Tibial artery (tissue), 4 donors: ENCODE measurements at regions of chr10 and their contacts with region 1.

Region 1: GRCh38 chr10:72248468-72249151 is 25.1 kb upstream of the DDIT4 start:
- DNase-seq: peak; percentile 93 to 97
- H3K4me3 ChIP-seq: peak overlapping the region; percentile 28 to 37
- H3K27ac ChIP-seq: peak overlapping the region; percentile 85 to 91
- H3K4me1 ChIP-seq: peaks cover 11 to 99% (median 85%) of the 10 kb centered on the region in 4 donors
- H3K27me3 ChIP-seq: no peaks in the 10 kb centered on the region
- CTCF ChIP-seq: no peak

Region 2: GRCh38 chr10:71957546-71958275 is 290.9 kb before region 1 on chr10:
- intact Hi-C with region 1: no loop called
- DNase-seq: no peak
- H3K4me3 ChIP-seq: no peak overlapping the region
- H3K27ac ChIP-seq: no peak overlapping the region
- H3K4me1 ChIP-seq: peaks cover 0 to 2% (median 1%) of the 10 kb centered on the region in 4 donors
- H3K27me3 ChIP-seq: no peaks in the 10 kb centered on the region
- CTCF ChIP-seq: no peak

Region 3: DNA sequence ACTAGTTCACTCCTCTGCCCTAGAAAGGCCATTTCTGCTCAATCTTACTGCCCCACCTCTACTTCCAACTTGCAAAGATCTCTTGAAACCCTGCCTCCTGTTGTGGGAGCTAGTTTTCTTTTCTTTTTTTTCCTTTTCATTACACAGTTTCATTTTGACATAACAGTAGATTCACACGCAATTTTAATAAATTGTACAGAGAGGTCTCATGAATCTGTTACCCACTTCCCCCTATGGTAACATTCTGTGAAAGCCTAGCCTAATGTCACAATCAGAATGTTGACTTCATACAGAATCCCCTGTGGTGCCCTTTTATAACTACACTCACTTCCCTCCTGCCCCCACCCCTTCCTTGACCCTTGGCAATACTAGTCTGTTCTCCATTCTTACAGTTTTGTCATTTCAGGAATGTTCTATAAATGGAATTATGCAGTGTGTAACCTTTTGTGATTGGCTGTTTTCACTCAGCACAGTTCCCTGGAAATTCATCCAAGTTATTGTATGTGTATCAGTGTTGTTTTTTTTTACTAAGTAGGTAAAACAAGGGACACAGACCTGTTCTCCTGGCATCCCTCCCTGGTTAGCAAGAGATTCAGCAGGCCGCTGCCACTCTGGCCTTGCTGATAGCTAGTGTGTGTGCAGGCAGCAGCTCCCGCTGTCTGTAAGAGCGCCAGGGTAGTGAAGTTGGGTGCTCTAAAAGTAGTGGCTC is 262.9 kb before region 1 on chr10:
- intact Hi-C with region 1: loop called (anchors 10 kb)
- DNase-seq: peak; percentile 81 to 86
- H3K4me3 ChIP-seq: no peak overlapping the region
- H3K27ac ChIP-seq: peak overlapping the region; percentile 74 to 81
- H3K4me1 ChIP-seq: peaks cover 0 to 85% (median 69%) of the 10 kb centered on the region in 4 donors
- H3K27me3 ChIP-seq: no peaks in the 10 kb centered on the region
- CTCF ChIP-seq: no peak